Psoas muscle (tissue), 8 donors: ENCODE measurements at regions of chr7 and their contacts with region 1.

Region 1: GRCh38 chr7:14717816-14718215 is 184.7 kb downstream of the DGKB start:
- DNase-seq: no peak
- ATAC-seq: peak in 3 of 4 donors; percentile 49 to 80 (median 62)
- H3K4me3 ChIP-seq: no peak overlapping the region
- H3K27ac ChIP-seq: no peak overlapping the region
- H3K4me1 ChIP-seq: peaks cover 3% of the 10 kb centered on the region
- H3K27me3 ChIP-seq: no peaks in the 10 kb centered on the region
- CTCF ChIP-seq: peak; percentile 73

Region 2: GRCh38 chr7:14761510-14762296 is 43.9 kb after region 1 on chr7:
- intact Hi-C with region 1: loop called in 1 of 2 experiments (anchors 5 kb)
- DNase-seq: peak; percentile 82 to 89
- ATAC-seq: peak; percentile 97 to 99 (median 98)
- H3K4me3 ChIP-seq: peak overlapping the region; percentile 23
- H3K27ac ChIP-seq: peak overlapping the region; percentile 89
- H3K4me1 ChIP-seq: peaks cover 25% of the 10 kb centered on the region
- H3K27me3 ChIP-seq: no peaks in the 10 kb centered on the region
- CTCF ChIP-seq: no peak

Region 3: GRCh38 chr7:14924398-14924797 is 206.6 kb after region 1 on chr7:
- intact Hi-C with region 1: loop called in 1 of 2 experiments (anchors 10 kb)
- DNase-seq: no peak
- ATAC-seq: no peak
- H3K4me3 ChIP-seq: no peak overlapping the region
- H3K27ac ChIP-seq: no peak overlapping the region
- H3K4me1 ChIP-seq: no peaks in the 10 kb centered on the region
- H3K27me3 ChIP-seq: no peaks in the 10 kb centered on the region
- CTCF ChIP-seq: no peak

Region 4: DNA sequence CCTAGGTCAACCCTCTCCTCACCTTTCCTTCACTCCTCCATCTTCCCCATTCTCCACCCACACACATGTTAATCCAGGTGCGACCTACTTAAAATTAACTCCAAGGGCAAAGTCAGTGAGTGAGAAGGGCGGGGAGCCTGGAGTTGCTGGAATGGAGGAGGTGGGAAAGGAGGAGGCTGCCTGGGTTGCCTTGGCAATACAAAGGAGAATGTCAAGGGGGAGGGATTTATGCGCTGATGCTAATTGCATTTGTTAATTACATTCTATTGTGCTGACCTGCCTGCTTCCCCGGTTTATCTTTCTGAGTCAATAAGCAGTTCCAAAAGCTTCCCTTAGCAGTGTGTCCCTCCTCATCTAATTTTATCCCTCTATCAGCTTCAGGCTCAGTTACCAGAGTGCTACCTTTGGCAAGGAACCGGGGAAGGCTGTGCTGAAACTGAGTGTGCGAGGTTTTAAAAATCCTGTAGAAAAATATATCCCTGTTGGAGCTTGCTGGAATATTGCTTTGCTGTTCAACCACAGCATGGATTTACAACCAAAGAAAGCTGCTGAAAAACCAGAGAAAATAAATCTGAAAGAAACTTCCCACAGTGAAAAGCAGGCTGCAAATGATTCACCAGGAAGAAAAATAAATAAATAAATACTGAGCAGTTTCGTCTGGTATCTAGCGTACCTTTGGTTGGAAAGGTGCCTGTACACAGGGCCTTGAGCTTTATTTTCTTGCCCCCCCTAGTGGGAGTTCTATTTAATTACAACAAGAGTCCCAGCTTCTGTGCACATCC is 297.9 kb after region 1 on chr7:
- intact Hi-C with region 1: loop called (anchors 1 to 2 kb)
- DNase-seq: no peak
- ATAC-seq: peak; percentile 86 to 93 (median 92)
- H3K4me3 ChIP-seq: peak overlapping the region; percentile 54
- H3K27ac ChIP-seq: peak overlapping the region; percentile 63
- H3K4me1 ChIP-seq: peaks cover 3% of the 10 kb centered on the region
- H3K27me3 ChIP-seq: no peaks in the 10 kb centered on the region
- CTCF ChIP-seq: peak; percentile 76

Region 5: GRCh38 chr7:15199482-15199881 is 481.7 kb after region 1 on chr7:
- intact Hi-C with region 1: no loop called
- DNase-seq: no peak
- ATAC-seq: no peak
- H3K4me3 ChIP-seq: no peak overlapping the region
- H3K27ac ChIP-seq: no peak overlapping the region
- H3K4me1 ChIP-seq: no peaks in the 10 kb centered on the region
- H3K27me3 ChIP-seq: no peaks in the 10 kb centered on the region
- CTCF ChIP-seq: no peak